Ascending aorta (tissue), 2 donors: ENCODE measurements at regions of chr4 and their contacts with region 1.

Region 1: DNA sequence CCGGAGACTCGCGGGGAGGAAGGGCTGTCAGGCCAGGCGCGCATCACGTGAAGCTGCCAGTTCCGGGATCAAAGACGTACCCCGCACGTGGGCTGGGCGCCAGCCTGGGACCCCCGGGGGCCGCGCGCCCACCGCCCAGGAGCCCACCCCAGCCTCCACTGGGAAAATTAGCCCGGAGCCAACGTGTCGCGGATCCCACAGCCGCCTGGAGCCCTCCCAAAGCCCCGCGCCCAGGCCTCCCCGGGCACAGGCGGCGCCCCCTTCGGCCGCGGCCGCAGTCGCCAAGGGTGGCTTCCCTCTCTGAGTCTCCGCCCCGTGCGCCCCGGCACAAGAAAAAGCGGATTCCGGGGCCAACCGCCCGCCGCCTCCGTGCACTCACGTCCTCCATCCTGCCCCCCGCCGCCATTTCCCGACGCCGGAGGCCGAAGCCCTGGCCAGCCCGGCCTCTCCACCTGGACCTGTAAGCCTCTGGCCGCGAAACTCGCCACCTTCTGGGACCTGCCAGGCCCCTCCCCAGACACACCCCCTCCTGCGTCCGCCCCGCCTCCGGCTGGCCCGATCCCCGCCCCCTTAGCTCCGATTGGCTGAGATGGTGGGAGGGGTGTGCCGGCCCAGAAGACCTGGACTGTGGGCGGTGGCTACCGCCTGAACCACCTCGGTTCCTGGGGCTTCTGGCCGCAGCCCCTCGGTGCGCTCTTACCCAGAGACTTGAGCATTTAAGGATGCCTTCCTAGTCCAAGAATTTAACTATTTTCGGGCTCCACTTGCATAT is at the start of gene TMEM192:
- DNase-seq: peak; percentile 77 to 96
- H3K4me3 ChIP-seq: peak within 1 kb of the TSS; percentile 78 to 84
- H3K27ac ChIP-seq: peak within 1 kb of the TSS; percentile 87 to 94
- H3K4me1 ChIP-seq: no peaks in the 10 kb centered on the region
- H3K27me3 ChIP-seq: no peaks in the 10 kb centered on the region
- CTCF ChIP-seq: peak; percentile 34 to 55 (median 43)
- total RNA-seq, gene TMEM192: 15.4 TPM

Region 2: DNA sequence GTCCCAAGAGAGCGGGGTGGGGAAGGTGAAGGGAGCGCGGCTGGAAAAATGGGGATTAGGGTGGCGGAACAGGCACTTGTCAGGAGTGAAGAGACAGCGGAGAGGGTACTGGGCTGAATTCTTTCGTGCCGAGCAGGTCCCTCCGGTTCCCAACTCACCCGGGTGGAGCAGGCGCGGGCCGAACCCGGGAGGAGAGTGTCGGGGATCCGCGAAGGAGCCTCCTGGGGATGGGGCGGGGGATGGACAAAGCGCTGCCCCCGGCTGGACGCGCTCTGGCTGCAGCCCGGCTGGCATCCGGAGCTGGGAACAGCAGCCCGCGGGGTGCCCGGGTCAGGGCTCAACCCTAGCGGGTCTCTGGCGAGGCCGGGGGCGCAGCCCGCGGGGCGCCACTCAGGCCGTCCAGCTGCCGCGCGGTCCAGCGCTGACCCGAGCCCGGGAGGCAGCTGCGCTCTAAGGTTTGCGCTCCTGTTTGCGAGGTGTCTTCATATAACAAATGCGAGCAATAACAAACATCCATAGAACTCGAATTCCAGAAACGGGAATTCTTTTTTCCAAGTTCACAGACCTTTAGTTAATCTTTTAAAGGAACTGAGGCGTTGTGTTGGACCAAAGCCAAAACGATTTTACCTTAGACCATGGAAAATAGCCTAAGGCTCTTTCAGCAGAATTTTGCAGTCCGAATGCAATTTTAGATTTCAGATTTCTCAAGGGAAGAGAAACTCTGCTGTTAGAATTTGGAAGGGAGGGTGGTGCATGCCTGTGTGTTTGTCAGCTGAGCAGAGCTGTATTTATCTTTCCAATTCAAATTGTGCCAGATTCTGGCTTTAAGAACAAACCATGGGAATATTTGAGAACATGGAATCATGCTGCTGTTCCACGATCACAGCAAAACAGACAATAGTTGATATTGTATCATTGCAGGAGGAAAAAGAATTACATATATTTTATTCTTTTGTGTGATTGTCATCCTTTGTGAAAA is 1768.1 kb before region 1 on chr4:
- intact Hi-C with region 1: loop called (anchors 10 kb)
- DNase-seq: no peak
- H3K4me3 ChIP-seq: peak overlapping the region; percentile 77 to 95
- H3K27ac ChIP-seq: peak overlapping the region; percentile 71 to 85
- H3K4me1 ChIP-seq: peaks cover 0 to 3% of the 10 kb centered on the region in 2 donors
- H3K27me3 ChIP-seq: no peaks in the 10 kb centered on the region
- CTCF ChIP-seq: no peak

Region 3: GRCh38 chr4:165207431-165208220 is 95.1 kb after region 1 on chr4 and contains the start of gene KLHL2:
- intact Hi-C with region 1: loop called (anchors 5 kb)
- DNase-seq: peak in 1 of 2 donors; percentile 86
- H3K4me3 ChIP-seq: peak within 1 kb of the TSS; percentile 89 to 95
- H3K27ac ChIP-seq: peak within 1 kb of the TSS; percentile 66 to 85
- H3K4me1 ChIP-seq: peaks cover 5 to 8% of the 10 kb centered on the region in 2 donors
- H3K27me3 ChIP-seq: no peaks in the 10 kb centered on the region
- CTCF ChIP-seq: peak in 1 of 3 experiments; percentile 12
- total RNA-seq, gene KLHL2: 0.96 TPM

Region 4: DNA sequence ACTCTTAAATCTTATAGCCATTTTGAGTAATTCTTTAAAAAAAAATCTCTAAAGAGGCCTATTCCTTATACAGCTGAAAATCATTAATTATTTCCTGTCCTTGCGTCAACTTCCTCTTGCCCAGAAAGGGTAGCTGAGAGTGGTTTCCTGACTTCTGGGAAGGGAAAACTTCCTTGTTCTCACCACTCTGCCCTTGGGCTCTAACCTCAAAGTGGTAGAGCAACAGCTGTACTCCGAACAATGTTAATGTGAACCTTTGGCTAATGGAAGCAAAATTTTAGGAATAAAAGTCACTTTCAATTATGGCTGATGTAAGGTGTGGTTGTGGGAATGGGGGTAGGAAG is 110.1 kb after region 1 on chr4:
- intact Hi-C with region 1: loop called (anchors 5 kb)
- DNase-seq: no peak
- H3K4me3 ChIP-seq: no peak overlapping the region
- H3K27ac ChIP-seq: peak overlapping the region; percentile 84 to 85
- H3K4me1 ChIP-seq: peaks cover 0 to 21% of the 10 kb centered on the region in 2 donors
- H3K27me3 ChIP-seq: no peaks in the 10 kb centered on the region
- CTCF ChIP-seq: no peak

Region 5: DNA sequence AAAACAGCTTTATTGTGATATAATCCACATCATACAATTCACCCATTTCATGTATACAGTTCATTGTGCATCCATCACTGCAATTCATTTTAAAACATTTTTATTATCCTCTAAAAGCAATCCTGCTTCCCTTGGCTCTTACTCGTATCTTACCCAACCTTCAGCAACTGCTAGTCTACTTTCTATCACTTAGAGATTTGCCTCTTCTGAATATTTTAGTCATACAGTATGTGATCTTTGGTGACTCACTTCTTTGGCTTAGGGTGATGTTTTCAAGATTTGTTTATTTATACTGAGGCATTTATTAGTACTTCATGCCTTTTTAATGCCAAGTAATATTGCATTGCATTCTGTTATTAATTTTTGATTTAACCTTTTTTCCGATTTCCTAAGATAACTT is 200.0 kb after region 1 on chr4:
- intact Hi-C with region 1: no loop called
- DNase-seq: no peak
- H3K4me3 ChIP-seq: no peak overlapping the region
- H3K27ac ChIP-seq: no peak overlapping the region
- H3K4me1 ChIP-seq: no peaks in the 10 kb centered on the region
- H3K27me3 ChIP-seq: no peaks in the 10 kb centered on the region
- CTCF ChIP-seq: no peak

Region 6: DNA sequence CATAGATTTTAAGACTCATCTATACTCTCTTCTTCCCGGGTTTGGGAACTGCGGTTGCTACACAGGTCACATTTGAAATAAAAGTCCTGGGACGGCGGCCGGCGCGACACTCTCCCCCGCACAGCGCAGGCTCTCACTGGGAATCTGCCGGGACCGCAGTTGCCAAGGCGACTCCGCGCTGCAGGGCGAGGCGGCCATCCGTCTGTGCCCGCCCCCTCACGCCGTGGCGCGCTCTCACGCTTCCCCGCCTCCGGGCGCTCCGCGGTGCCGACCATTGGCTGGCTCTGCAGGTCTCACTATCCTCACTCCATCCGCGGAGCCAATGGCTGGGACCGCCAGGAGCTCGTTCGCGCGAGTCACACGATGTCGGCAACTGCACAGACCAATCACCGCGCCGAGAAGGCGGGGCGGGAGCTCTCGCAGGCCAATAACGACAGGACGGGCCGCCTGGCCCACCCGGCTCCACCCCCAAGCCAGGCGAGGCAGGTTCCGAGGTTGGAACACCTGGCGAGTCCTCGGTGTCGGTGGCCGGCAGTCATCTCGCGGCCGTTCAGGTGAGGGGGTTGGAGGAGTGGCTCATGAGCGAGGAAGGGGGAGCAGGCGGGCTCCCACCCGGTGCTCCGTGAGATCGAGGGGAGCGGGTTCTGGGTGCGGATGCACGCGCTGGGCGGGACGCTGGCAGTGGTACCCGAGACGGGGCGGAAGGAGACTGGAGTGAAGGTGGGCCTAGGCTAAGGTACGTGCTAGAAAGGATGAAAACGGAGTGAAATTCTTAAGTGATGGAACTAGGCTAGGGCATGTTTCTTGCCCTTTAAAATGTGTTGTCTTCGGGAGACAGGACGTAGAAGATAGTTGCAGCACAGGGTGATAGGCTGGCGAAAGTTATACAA is 214.9 kb after region 1 on chr4 and contains the start of gene MSMO1:
- intact Hi-C with region 1: loop called (anchors 1 kb)
- DNase-seq: peak; percentile 99 to 100
- H3K4me3 ChIP-seq: peak within 1 kb of the TSS; percentile 72 to 99
- H3K27ac ChIP-seq: peak within 1 kb of the TSS; percentile 65 to 71
- H3K4me1 ChIP-seq: peaks cover 0 to 12% of the 10 kb centered on the region in 2 donors
- H3K27me3 ChIP-seq: no peaks in the 10 kb centered on the region
- CTCF ChIP-seq: no peak
- total RNA-seq, gene MSMO1: 3.6 TPM

Region 7: DNA sequence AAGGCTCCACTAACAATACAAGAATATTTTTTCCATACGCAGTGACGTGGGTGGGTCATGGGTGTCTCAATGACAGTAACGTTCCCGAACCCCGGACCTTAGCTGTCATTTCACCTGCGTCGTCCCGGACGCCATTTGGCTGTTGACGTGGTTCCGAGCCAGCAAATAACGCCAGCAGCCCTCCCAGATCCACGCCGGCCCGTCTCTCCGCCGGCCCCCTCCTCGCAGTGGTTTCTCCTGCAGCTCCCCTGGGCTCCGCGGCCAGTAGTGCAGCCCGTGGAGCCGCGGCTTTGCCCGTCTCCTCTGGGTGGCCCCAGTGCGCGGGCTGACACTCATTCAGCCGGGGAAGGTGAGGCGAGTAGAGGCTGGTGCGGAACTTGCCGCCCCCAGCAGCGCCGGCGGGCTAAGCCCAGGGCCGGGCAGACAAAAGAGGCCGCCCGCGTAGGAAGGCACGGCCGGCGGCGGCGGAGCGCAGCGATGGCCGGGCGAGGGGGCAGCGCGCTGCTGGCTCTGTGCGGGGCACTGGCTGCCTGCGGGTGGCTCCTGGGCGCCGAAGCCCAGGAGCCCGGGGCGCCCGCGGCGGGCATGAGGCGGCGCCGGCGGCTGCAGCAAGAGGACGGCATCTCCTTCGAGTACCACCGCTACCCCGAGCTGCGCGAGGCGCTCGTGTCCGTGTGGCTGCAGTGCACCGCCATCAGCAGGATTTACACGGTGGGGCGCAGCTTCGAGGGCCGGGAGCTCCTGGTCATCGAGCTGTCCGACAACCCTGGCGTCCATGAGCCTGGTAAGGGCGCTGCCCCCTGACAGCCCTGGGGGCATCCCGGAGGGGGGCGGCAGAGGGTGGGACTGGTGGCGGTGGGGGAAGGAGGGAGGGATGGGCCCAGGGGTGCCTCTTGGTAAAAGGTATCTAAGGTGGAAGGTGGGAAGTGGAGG is 266.5 kb after region 1 on chr4 and contains the start of gene CPE:
- intact Hi-C with region 1: loop called (anchors 2 kb)
- DNase-seq: peak; percentile 23 to 94
- H3K4me3 ChIP-seq: peak within 1 kb of the TSS; percentile 75 to 93
- H3K27ac ChIP-seq: peak within 1 kb of the TSS; percentile 87 to 88
- H3K4me1 ChIP-seq: peaks cover 0 to 11% of the 10 kb centered on the region in 2 donors
- H3K27me3 ChIP-seq: no peaks in the 10 kb centered on the region
- CTCF ChIP-seq: peak; percentile 56 to 67 (median 65)
- total RNA-seq, gene CPE: 199 TPM

Region 8: DNA sequence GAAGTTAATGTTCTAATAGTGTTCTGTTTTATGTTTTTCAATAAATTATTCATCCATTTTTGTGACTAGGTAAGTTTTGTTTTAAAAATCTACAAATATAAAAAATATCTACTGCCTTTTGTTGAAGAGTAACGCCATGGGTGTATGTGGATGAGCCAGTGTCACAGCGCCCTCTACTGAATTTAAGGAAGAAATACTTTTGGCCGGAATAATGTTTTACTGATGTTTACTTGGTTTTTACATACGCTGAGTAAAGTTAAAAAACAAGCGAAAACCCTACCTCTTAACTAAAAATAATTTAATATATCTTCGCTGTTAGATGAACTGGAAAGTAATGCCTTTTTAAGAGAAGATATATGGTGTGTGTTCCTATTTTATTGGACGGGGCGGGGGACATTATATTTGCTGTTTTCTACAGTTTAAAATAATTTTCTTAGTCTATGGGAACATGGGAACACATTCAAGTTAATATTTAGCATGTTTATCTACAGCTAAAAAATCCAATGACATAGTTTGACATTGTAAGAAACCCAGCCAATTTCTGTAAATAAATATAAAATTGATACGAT is 352.3 kb after region 1 on chr4:
- intact Hi-C with region 1: loop called (anchors 5 kb)
- DNase-seq: no peak
- H3K4me3 ChIP-seq: no peak overlapping the region
- H3K27ac ChIP-seq: peak overlapping the region in 1 of 2 donors; percentile 15
- H3K4me1 ChIP-seq: no peaks in the 10 kb centered on the region
- H3K27me3 ChIP-seq: no peaks in the 10 kb centered on the region
- CTCF ChIP-seq: peak; percentile 64 to 84 (median 81)